Caco-2 (cell line): ENCODE measurements at regions of chr2 and their contacts with region 1.

Region 1: GRCh38 chr2:159118115-159118858 is 149.8 kb downstream of the TANC1 start:
- DNase-seq: peak; percentile 83 to 87
- H3K4me3 ChIP-seq: no peak overlapping the region
- H3K4me3 Mint-ChIP-seq: no peak overlapping the region
- H3K27ac Mint-ChIP-seq: no peak overlapping the region
- H3K4me1 ChIP-seq: peaks cover 28% of the 10 kb centered on the region
- H3K4me1 Mint-ChIP-seq: peaks cover 26% of the 10 kb centered on the region
- H3K27me3 ChIP-seq: no peaks in the 10 kb centered on the region
- H3K27me3 Mint-ChIP-seq: no peaks in the 10 kb centered on the region
- CTCF ChIP-seq: peak; percentile 82 to 91

Region 2: GRCh38 chr2:158753641-158754611 is 364.4 kb before region 1 on chr2:
- CTCF ChIA-PET with region 1: no interaction called
- POLR2A ChIA-PET with region 1: no interaction called
- intact Hi-C with region 1: loop called (anchors 5 kb)
- DNase-seq: peak in 1 of 2 experiments; percentile 64
- H3K4me3 ChIP-seq: no peak overlapping the region
- H3K4me3 Mint-ChIP-seq: no peak overlapping the region
- H3K27ac Mint-ChIP-seq: no peak overlapping the region
- H3K4me1 ChIP-seq: peaks cover 25% of the 10 kb centered on the region
- H3K4me1 Mint-ChIP-seq: peaks cover 22% of the 10 kb centered on the region
- H3K27me3 ChIP-seq: no peaks in the 10 kb centered on the region
- H3K27me3 Mint-ChIP-seq: no peaks in the 10 kb centered on the region
- CTCF ChIP-seq: peak; percentile 82

Region 3: GRCh38 chr2:158968396-158969161 is 149.7 kb before region 1 on chr2 and contains the start of gene TANC1:
- CTCF ChIA-PET with region 1: interaction called, 6 read pairs
- POLR2A ChIA-PET with region 1: interaction called, 3 read pairs
- intact Hi-C with region 1: loop called (anchors 1 kb)
- DNase-seq: peak; percentile 96 to 98
- H3K4me3 ChIP-seq: peak within 1 kb of the TSS; percentile 90
- H3K4me3 Mint-ChIP-seq: peak within 1 kb of the TSS; percentile 98
- H3K27ac Mint-ChIP-seq: peak within 1 kb of the TSS; percentile 84
- H3K4me1 ChIP-seq: peaks cover 16% of the 10 kb centered on the region; the same call in 1 of the 2 replicates
- H3K4me1 Mint-ChIP-seq: peaks cover 17% of the 10 kb centered on the region
- H3K27me3 ChIP-seq: no peaks in the 10 kb centered on the region
- H3K27me3 Mint-ChIP-seq: no peaks in the 10 kb centered on the region
- CTCF ChIP-seq: no peak
- total RNA-seq, gene TANC1: 21.1 and 23.0 TPM in 2 replicates

Region 4: GRCh38 chr2:159030674-159031380 is 87.5 kb before region 1 on chr2:
- CTCF ChIA-PET with region 1: interaction called, 77 read pairs
- POLR2A ChIA-PET with region 1: no interaction called
- intact Hi-C with region 1: loop called (anchors 1 kb)
- DNase-seq: peak; percentile 63 to 85
- H3K4me3 ChIP-seq: no peak overlapping the region
- H3K4me3 Mint-ChIP-seq: peak overlapping the region; percentile 42
- H3K27ac Mint-ChIP-seq: peak overlapping the region; percentile 91
- H3K4me1 ChIP-seq: peaks cover 44% of the 10 kb centered on the region
- H3K4me1 Mint-ChIP-seq: peaks cover 55% of the 10 kb centered on the region
- H3K27me3 ChIP-seq: no peaks in the 10 kb centered on the region
- H3K27me3 Mint-ChIP-seq: no peaks in the 10 kb centered on the region
- CTCF ChIP-seq: no peak

Region 5: DNA sequence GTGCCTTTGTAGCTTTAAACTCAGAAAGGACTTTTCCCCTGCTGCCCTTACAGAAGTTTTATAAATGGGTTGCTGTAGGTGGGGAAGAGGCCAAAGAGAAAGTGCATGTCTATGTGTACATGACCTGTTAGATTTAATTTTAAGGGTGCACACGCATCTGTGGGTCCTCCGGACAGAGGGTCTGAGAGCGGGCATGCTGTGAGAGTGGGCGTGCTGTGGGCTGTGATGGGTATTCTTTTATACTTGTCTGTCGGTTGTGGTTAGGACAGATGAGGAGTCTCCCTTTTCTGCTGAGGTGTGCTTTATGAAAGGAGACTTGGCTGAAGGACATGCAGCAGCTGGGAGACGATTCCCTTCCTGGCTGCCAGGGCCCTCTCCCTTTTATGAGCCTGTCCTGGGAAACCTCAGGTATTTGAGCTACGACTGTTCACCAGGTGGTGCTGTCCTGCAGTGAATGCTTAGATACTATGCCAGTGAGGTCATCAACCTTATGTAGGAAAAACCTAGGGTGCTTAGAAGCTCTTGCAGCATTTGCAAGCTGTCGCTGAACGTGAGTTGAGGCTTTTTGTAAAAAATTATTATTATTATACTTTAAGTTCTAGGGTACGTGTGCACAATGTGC is 82.4 kb before region 1 on chr2:
- CTCF ChIA-PET with region 1: interaction called, 77 read pairs
- POLR2A ChIA-PET with region 1: interaction called, 5 read pairs
- intact Hi-C with region 1: loop called (anchors 1 kb)
- DNase-seq: peak; percentile 79 to 85
- H3K4me3 ChIP-seq: no peak overlapping the region
- H3K4me3 Mint-ChIP-seq: no peak overlapping the region
- H3K27ac Mint-ChIP-seq: no peak overlapping the region
- H3K4me1 ChIP-seq: peaks cover 30% of the 10 kb centered on the region
- H3K4me1 Mint-ChIP-seq: peaks cover 54% of the 10 kb centered on the region
- H3K27me3 ChIP-seq: no peaks in the 10 kb centered on the region
- H3K27me3 Mint-ChIP-seq: no peaks in the 10 kb centered on the region
- CTCF ChIP-seq: peak; percentile 54 to 72

Region 6: GRCh38 chr2:159088906-159089305 is 29.4 kb before region 1 on chr2:
- CTCF ChIA-PET with region 1: interaction called, 4 read pairs
- POLR2A ChIA-PET with region 1: no interaction called
- intact Hi-C with region 1: loop called (anchors 1 kb)
- DNase-seq: no peak
- H3K4me3 ChIP-seq: no peak overlapping the region
- H3K4me3 Mint-ChIP-seq: no peak overlapping the region
- H3K27ac Mint-ChIP-seq: no peak overlapping the region
- H3K4me1 ChIP-seq: peaks cover 7% of the 10 kb centered on the region; the same call in 1 of the 2 replicates
- H3K4me1 Mint-ChIP-seq: peaks cover 23% of the 10 kb centered on the region
- H3K27me3 ChIP-seq: no peaks in the 10 kb centered on the region
- H3K27me3 Mint-ChIP-seq: no peaks in the 10 kb centered on the region
- CTCF ChIP-seq: no peak

Region 7: DNA sequence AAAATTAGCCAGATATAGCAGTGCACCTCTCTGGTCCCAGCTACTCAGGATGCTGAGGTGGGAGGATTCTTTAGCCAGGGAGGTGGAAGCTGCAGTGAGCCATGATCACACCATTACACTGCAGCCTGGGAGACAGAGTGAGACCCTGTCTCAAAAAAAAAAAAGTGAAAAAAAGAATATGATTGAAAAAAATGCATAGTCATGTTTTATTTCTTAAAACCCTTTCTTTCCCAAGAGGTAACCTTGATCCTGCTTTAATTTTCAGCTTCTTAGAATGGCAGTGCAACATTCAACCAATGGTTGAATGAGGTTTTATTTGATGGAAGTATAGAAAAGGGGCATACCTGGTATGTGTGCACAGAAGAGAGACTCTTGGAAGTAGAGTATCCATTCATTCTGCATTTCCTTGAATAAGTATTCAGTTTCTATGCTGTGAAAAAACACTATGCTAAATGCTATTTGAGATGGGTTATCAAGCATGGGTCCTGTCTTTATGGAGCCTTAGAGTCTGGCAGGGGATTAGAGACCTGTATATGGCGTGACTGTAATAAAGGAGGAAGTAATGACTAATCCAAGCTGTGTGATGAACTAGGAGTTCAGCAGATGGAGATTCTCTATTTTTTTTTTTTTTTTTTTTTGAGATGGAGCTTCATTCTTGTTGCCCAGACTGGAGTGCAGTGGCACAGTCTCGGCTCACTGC is 21.9 kb after region 1 on chr2:
- CTCF ChIA-PET with region 1: no interaction called
- POLR2A ChIA-PET with region 1: no interaction called
- intact Hi-C with region 1: no loop called
- DNase-seq: no peak
- H3K4me3 ChIP-seq: no peak overlapping the region
- H3K4me3 Mint-ChIP-seq: no peak overlapping the region
- H3K27ac Mint-ChIP-seq: no peak overlapping the region
- H3K4me1 ChIP-seq: peaks cover 3% of the 10 kb centered on the region; the same call in 1 of the 2 replicates
- H3K4me1 Mint-ChIP-seq: peaks cover 21% of the 10 kb centered on the region
- H3K27me3 ChIP-seq: no peaks in the 10 kb centered on the region
- H3K27me3 Mint-ChIP-seq: no peaks in the 10 kb centered on the region
- CTCF ChIP-seq: no peak

Region 8: DNA sequence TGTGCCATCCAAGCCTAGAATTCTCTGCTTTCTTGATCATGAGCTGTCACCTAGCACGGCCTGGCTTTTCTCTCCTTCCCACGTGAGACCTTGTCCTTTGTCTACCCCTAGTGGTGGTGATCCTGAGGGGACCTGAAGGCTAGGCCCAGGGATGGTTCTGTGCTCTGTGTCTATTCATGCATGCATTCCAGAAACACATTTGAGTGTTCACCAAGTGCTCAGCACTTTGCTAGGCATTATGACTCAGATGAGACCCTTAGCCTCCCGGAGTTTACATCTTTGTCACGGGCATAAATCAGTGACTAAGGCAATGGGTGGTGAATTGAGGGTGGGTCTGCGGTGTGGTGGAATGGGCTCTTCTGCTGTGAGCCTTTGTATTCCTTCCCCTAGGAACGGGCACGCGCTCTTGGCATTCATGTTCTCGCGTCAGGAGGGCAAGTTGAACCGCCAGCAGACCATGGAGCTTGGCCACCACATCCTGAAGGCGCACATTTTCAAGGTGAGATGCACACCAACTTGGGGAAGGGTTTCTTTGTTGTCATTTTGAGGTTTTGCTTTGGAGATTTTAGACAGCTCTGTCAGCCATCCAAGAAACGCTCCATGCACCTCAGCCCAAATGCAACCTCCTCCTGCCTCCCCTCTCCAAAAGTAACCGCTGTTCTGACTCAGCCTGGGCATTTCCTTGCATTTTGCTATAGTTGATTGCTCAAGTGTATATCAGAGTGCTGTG is 67.3 kb after region 1 on chr2:
- CTCF ChIA-PET with region 1: interaction called, 4 read pairs
- POLR2A ChIA-PET with region 1: no interaction called
- intact Hi-C with region 1: loop called (anchors 2 kb)
- DNase-seq: peak in 1 of 2 experiments; percentile 63
- H3K4me3 ChIP-seq: no peak overlapping the region
- H3K4me3 Mint-ChIP-seq: no peak overlapping the region
- H3K27ac Mint-ChIP-seq: no peak overlapping the region
- H3K4me1 ChIP-seq: no peaks in the 10 kb centered on the region
- H3K4me1 Mint-ChIP-seq: no peaks in the 10 kb centered on the region
- H3K27me3 ChIP-seq: no peaks in the 10 kb centered on the region
- H3K27me3 Mint-ChIP-seq: no peaks in the 10 kb centered on the region
- CTCF ChIP-seq: peak in 1 of 2 experiments; percentile 75